ENCODE measurements at regions of chr12 and their contacts with region 1.

Region 1: DNA sequence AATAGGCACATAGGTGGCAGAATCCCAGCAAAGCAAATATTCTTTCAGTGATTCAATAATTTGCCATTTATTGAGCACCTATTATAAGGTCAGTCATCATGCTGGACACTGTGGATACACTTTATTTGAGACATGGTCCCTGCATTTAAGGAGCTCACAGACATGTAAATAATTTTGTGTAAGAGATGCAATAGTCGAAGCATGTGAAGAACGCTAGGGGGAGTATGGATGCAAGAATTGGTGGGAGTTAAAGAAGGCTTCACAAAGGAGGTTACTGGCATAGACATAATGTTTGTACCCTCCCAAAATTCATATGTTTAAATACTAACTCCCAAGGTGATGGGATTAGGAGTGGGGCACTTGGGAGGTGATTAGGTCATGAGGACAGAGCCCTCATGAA is 260.6 kb upstream of the GARIN6 start:
- ATAC-seq: peak in 3 of 8 experiments; percentile 30 to 64 (median 50)
- H3K4me3 ChIP-seq: no peak overlapping the region
- H3K27ac ChIP-seq: no peak overlapping the region
- H3K4me1 ChIP-seq: no peaks in the 10 kb centered on the region

Region 2: DNA sequence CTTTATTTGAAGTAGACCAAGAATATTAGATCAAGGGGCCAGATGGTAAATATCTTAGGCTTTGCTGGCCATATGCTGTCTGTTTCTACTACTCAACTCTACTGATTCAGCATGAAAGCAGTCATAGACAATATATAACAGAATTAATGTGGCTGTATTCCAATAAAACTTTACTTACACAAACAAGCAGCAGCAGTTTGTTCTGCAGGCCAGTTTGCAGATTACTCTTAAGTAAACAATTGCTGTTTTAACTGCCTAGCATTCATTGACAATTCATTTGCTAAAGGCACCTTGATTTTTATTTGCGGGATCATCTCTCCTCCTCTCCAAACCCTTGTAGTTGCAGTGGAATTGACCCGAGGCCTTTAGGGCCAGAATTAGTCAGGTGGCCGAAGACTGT is 166.6 kb after region 1 on chr12:
- in situ Hi-C with region 1: no loop called
- ATAC-seq: peak in 1 of 8 experiments; percentile 30
- H3K4me3 ChIP-seq: no peak overlapping the region
- H3K27ac ChIP-seq: no peak overlapping the region
- H3K4me1 ChIP-seq: no peaks in the 10 kb centered on the region

Region 3: DNA sequence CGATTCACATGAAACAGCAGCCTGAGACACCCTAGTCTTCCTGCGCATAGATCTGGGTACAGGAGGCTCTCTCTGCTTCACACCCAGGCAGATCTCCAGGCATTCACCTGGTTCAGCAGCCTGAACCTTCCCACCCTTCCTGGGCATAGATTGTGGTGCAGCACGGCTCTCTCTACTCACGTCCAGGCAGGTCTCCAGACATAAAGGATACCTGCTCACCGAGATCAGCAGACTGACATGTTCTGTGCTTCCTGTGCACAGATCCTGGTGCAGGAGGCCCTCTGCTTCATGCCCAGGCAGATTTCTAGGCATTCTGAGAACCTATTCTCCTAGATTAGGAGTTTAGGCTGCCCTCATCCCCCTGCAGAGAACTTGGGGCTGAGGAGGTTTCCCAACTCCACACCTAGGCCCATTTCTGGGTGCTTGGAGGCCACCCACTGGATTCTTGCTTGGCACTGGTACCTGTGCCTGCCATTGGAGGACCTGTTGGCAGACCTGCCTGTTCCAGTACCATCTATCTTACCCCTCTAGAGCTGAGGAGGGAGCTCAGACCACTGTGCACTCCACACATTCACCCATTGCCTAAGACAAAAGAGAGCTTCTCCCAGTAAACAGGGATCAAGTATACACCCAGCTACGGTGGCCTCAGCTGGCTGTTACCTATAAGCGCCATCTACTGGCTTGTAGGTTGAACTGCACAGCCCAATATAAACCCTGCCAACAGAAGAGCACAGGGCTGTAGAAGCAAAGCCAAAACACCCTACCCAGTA is 232.7 kb after region 1 on chr12:
- in situ Hi-C with region 1: loop called in 1 of 9 experiments (anchors 25 kb)
- ATAC-seq: peak in 4 of 8 experiments; percentile 31 to 76 (median 62)
- H3K4me3 ChIP-seq: no peak overlapping the region
- H3K27ac ChIP-seq: no peak overlapping the region
- H3K4me1 ChIP-seq: no peaks in the 10 kb centered on the region

Region 4: DNA sequence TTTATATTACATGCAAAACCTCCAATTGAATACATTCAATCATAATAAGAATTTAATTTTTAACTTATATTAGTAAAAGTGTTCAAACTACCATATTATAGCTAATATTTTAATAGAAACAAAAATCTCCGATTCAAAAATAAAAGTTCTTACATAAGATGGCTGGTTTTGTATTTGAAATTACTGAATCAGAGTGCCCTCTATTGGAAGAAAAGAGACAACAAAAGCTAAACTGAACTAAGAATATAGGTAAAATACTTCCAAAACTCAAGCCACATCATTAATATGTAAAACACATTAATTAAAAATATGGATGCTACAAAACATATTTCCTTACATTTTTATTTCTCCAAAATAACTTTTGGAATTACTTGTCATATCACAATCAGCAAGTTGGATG is 380.9 kb after region 1 on chr12:
- in situ Hi-C with region 1: loop called in 2 of 9 experiments (anchors 25 kb)
- ATAC-seq: no peak
- H3K4me3 ChIP-seq: no peak overlapping the region
- H3K27ac ChIP-seq: no peak overlapping the region
- H3K4me1 ChIP-seq: no peaks in the 10 kb centered on the region